ENCODE measurements at regions of chr10 and their contacts with region 1.

Region 1: DNA sequence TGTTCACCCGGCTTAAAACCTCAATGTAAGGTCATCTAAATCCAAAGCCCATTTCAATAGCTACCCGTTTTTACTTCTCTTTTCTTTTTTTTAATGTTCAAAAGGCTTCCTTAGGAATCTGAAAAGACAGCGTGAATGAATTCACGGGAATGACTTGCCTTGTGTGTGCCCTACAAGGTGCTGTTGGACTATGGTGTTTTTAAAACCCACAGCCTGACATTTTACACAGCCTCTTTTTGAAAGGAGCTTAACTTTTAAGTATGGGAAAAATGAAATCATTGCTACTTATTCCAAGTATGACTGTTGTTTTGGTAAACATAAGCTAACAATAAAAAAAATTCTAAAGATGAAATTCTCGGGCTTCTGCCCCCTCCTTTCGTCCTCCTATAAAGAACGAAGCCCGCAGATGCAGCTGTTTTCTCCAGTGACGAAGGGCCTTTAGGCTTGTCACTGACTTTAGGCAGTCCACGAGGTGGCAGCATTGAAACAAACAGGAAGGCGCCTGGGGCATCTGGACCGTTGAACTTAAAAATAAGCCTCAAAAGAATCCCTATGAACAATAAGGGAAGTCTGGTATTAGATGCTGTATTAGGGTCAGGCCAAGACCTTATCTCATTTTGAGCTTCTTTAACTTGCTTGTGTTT is 141.3 kb downstream of the NRP1 start:
- DNase-seq: peak; percentile 84
- H3K4me3 Mint-ChIP-seq: no peak overlapping the region
- H3K27ac Mint-ChIP-seq: no peak overlapping the region
- H3K4me1 Mint-ChIP-seq: peaks cover 5% of the 10 kb centered on the region
- H3K27me3 Mint-ChIP-seq: peaks cover 8% of the 10 kb centered on the region

Region 2: DNA sequence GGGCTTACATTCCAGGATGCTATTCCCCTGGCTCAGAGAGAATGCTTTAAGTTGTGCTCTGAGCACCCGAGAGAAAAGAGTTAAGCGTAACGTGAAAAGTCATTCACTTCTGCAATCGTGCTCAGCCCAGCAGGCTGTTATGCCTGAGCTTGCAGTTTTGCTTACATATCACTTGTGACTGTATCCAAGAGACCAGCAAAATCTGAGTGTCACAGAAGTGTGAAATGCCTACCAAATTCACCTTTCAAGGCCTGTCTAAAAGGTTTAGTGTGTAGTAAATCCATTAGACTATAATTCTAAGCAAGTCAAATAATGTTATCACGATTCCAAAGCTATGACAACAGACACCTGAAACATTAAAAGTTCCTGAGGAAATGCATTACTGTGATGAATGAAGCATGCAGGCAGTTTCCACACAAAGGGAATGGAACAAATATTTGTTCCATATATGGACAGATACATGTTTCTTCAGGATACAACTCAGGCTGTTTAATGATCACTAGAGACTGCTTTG is 255.2 kb before region 1 on chr10:
- CTCF ChIA-PET with region 1: no interaction called
- POLR2A ChIA-PET with region 1: no interaction called
- intact Hi-C with region 1: no loop called
- DNase-seq: no peak
- H3K4me3 Mint-ChIP-seq: no peak overlapping the region
- H3K27ac Mint-ChIP-seq: peak overlapping the region; percentile 64
- H3K4me1 Mint-ChIP-seq: peaks cover 70% of the 10 kb centered on the region
- H3K27me3 Mint-ChIP-seq: no peaks in the 10 kb centered on the region

Region 3: DNA sequence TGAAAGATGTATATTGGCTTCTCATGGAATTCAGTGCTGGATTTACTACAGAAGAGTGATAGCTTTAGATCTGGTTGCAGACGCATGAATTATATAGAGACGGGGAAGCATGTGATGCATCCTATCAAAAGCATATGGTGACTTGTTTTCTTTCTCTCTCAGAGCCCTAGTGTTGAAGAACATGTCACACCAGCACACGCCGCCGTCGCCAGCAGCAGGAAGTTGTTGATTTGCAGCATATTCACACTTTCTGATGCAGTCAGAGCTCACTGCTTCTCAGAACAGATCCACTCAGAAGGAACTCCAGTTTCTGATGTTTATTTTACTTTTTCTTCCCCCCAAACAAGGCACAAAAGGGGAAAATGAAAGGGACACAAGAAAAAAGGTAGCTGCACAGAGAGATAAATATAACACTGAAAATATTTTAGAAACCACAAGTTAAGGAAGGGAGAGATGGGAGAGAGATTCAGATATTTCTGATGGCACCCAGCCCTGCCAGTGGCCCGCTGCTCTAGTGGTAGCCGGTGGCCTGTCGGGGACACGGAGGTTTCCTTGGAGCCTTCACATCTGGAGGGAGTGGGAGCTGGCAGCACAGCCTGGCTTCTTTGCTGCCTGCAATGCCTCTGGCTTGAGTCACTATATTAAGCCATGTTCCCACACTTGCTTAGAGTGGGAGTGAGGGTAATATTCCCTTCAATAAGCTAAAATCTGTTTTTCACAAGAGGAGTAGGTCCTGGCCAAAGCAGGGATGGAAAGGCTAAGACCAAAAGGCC is 18.1 kb after region 1 on chr10:
- CTCF ChIA-PET with region 1: interaction called, 12 read pairs
- POLR2A ChIA-PET with region 1: no interaction called
- intact Hi-C with region 1: no loop called
- DNase-seq: peak; percentile 56
- H3K4me3 Mint-ChIP-seq: no peak overlapping the region
- H3K27ac Mint-ChIP-seq: peak overlapping the region; percentile 36
- H3K4me1 Mint-ChIP-seq: peaks cover 20% of the 10 kb centered on the region
- H3K27me3 Mint-ChIP-seq: no peaks in the 10 kb centered on the region

Measured in activated CD4-positive, alpha-beta memory T cell treated with anti-CD3 and anti-CD28 coated beads for 36 hours (primary cell).